IMR-90 (cell line): ENCODE measurements at regions of chr6 and their contacts with region 1.

Region 1: DNA sequence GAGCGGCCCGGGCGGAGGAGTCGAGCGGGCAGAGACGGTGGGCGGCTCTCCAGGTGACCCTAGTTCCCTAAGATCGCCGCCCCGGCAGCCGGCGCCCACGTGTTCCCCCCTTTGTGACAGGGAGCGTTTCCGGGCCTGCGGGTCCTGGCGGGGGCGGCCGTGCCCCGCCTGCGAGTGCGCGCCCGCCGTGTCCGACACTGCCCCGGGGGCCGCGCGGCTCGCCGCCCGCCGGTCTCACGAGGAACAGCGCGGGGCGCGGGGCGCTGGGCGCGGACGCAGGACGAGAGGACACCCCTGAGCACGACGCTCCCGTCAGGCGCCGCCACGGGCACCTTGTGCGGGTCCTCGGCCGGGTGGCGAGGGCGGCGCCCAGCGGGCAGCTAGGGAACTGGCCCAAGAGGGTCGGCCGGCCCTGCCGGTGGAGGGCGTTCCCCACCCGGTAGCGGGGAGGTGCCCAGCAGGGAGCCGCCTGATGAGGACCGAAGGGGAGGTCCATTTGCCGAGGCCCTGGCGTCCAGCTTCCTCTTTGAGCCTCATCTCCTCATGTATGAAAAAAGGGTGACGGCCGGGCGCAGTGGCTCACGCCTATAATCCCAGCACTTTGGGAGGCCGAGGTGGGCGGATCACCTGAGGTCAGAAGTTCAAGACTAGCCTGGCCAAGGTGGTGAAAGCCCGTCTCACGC is at the start of gene VARS1:
- DNase-seq: peak; percentile 84
- ATAC-seq: peak; percentile 96
- H3K4me3 ChIP-seq: peak within 1 kb of the TSS; percentile 77
- H3K27ac ChIP-seq: peak within 1 kb of the TSS; percentile 97
- H3K4me1 ChIP-seq: no peaks in the 10 kb centered on the region; the same call in 1 of the 2 replicates
- H3K27me3 ChIP-seq: no peaks in the 10 kb centered on the region
- CTCF ChIP-seq: peak; percentile 97
- POLR2A ChIP-seq: peak; percentile 44; the same call in 1 of the 2 replicates
- RAD21 ChIP-seq: peak; percentile 53
- total RNA-seq, gene VARS1: 32.2 and 41.2 TPM in 2 replicates

Region 2: DNA sequence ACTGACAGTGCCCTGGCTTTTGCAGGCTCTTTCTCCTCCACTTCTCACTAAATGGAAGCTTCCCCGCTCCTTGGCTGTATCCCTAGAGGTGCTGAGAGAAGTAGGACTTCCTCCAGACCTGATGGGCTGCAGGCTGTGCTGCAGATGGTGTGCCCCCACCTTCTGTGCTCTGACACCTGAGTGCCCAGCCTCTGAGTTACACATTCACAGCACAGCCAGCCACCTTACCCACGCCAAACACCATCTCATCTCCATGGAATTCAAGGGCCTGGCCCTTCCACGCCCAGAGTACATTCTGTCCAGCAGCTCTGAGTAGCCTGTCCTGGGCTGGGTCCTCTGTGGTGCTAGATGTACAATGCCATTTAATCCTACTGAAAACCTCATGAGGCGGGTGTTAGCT is 869.1 kb before region 1 on chr6:
- CTCF ChIA-PET with region 1: no interaction called
- POLR2A ChIA-PET with region 1: no interaction called
- dilution Hi-C with region 1: no loop called
- in situ Hi-C with region 1: no loop called
- intact Hi-C with region 1: no loop called
- DNase-seq: no peak
- ATAC-seq: peak; percentile 48; the same call in 1 of the 2 replicates
- H3K4me3 ChIP-seq: no peak overlapping the region
- H3K27ac ChIP-seq: no peak overlapping the region
- H3K4me1 ChIP-seq: no peaks in the 10 kb centered on the region
- H3K27me3 ChIP-seq: peaks cover 9% of the 10 kb centered on the region; the same call in 1 of the 2 replicates
- CTCF ChIP-seq: no peak
- POLR2A ChIP-seq: no peak
- RAD21 ChIP-seq: no peak

Region 3: GRCh38 chr6:31702819-31703522 is 92.8 kb before region 1 on chr6 and contains the start of gene ABHD16A:
- CTCF ChIA-PET with region 1: interaction called, 3 read pairs
- POLR2A ChIA-PET with region 1: interaction called, 11 read pairs
- dilution Hi-C with region 1: no loop called
- in situ Hi-C with region 1: no loop called
- intact Hi-C with region 1: no loop called
- DNase-seq: peak; percentile 98
- ATAC-seq: peak; percentile 94
- H3K4me3 ChIP-seq: peak within 1 kb of the TSS; percentile 67
- H3K27ac ChIP-seq: peak within 1 kb of the TSS; percentile 82
- H3K4me1 ChIP-seq: peaks cover 6% of the 10 kb centered on the region
- H3K27me3 ChIP-seq: no peaks in the 10 kb centered on the region
- CTCF ChIP-seq: no peak
- POLR2A ChIP-seq: peak; percentile 91
- RAD21 ChIP-seq: no peak
- total RNA-seq, gene ABHD16A: 30.3 and 35.1 TPM in 2 replicates

Region 4: DNA sequence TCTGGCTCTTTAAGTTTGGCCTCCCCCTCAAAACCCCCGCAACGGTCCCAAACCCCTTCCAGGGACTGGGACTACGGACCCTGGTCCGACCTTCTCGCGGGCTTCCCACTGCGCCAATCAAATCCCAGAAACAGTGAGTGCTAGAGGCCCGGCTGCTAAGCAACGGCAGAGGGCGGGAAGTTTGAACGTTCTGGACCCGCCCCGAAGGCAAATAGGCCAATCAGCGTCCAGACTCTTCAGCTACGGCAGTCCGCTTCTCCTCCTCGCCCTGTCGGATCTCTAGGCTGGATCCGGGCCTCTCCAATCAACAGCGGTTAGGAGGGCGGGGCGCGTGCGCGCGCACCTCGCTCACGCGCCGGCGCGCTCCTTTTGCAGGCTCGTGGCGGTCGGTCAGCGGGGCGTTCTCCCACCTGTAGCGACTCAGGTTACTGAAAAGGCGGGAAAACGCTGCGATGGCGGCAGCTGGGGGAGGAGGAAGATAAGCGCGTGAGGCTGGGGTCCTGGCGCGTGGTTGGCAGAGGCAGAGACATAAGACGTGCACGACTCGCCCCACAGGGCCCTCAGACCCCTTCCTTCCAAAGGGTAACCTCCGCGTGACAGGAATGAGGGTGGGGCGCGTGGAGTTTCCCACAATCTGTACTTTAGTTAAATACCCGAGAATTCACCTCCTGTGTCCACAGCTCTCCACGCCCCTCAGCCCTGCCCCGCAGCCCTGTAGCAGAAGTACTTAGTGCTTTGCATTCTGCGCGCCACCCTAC is 55.9 kb before region 1 on chr6 and contains the start of gene MSH5:
- CTCF ChIA-PET with region 1: no interaction called
- POLR2A ChIA-PET with region 1: no interaction called
- dilution Hi-C with region 1: no loop called
- in situ Hi-C with region 1: no loop called
- intact Hi-C with region 1: loop called (anchors 2 kb)
- DNase-seq: peak; percentile 99
- ATAC-seq: peak; percentile 88
- H3K4me3 ChIP-seq: peak within 1 kb of the TSS; percentile 73
- H3K27ac ChIP-seq: peak within 1 kb of the TSS; percentile 68; the same call in 1 of the 2 replicates
- H3K4me1 ChIP-seq: peaks cover 13% of the 10 kb centered on the region
- H3K27me3 ChIP-seq: no peaks in the 10 kb centered on the region
- CTCF ChIP-seq: no peak
- POLR2A ChIP-seq: no peak
- RAD21 ChIP-seq: no peak
- total RNA-seq, gene MSH5: 4.7 and 5.6 TPM in 2 replicates

Region 5: GRCh38 chr6:31806465-31807272 is 10.9 kb after region 1 on chr6 and contains the start of gene LSM2:
- CTCF ChIA-PET with region 1: interaction called, 10 read pairs
- POLR2A ChIA-PET with region 1: no interaction called
- dilution Hi-C with region 1: no loop called
- in situ Hi-C with region 1: no loop called
- intact Hi-C with region 1: no loop called
- DNase-seq: peak; percentile 96
- ATAC-seq: peak; percentile 100
- H3K4me3 ChIP-seq: peak within 1 kb of the TSS; percentile 57
- H3K27ac ChIP-seq: peak within 1 kb of the TSS; percentile 46
- H3K4me1 ChIP-seq: peaks cover 3% of the 10 kb centered on the region; the same call in 1 of the 2 replicates
- H3K27me3 ChIP-seq: no peaks in the 10 kb centered on the region
- CTCF ChIP-seq: peak; percentile 28; the same call in 1 of the 2 replicates
- POLR2A ChIP-seq: peak; percentile 51; the same call in 1 of the 2 replicates
- RAD21 ChIP-seq: 0 out of 2 replicates have a peak, but pooled peaks have one; percentile 0
- total RNA-seq, gene LSM2: 48.0 and 56.3 TPM in 2 replicates

Region 6: GRCh38 chr6:31922942-31923341 is 127.2 kb after region 1 on chr6:
- CTCF ChIA-PET with region 1: no interaction called
- POLR2A ChIA-PET with region 1: no interaction called
- dilution Hi-C with region 1: no loop called
- in situ Hi-C with region 1: no loop called
- intact Hi-C with region 1: no loop called
- DNase-seq: no peak
- ATAC-seq: no peak
- H3K4me3 ChIP-seq: no peak overlapping the region
- H3K27ac ChIP-seq: no peak overlapping the region
- H3K4me1 ChIP-seq: peaks cover 6% of the 10 kb centered on the region; the same call in 1 of the 2 replicates
- H3K27me3 ChIP-seq: 0 out of 2 replicates have a peak, but pooled peaks cover 2% of the 10 kb centered on the region
- CTCF ChIP-seq: no peak
- POLR2A ChIP-seq: no peak
- RAD21 ChIP-seq: peak; percentile 14; the same call in 1 of the 2 replicates